Activated CD4-positive, alpha-beta T cell treated with anti-CD3 and anti-CD28 coated beads for 36 hours (primary cell): ENCODE measurements at regions of chr19 and their contacts with region 1.

Region 1: DNA sequence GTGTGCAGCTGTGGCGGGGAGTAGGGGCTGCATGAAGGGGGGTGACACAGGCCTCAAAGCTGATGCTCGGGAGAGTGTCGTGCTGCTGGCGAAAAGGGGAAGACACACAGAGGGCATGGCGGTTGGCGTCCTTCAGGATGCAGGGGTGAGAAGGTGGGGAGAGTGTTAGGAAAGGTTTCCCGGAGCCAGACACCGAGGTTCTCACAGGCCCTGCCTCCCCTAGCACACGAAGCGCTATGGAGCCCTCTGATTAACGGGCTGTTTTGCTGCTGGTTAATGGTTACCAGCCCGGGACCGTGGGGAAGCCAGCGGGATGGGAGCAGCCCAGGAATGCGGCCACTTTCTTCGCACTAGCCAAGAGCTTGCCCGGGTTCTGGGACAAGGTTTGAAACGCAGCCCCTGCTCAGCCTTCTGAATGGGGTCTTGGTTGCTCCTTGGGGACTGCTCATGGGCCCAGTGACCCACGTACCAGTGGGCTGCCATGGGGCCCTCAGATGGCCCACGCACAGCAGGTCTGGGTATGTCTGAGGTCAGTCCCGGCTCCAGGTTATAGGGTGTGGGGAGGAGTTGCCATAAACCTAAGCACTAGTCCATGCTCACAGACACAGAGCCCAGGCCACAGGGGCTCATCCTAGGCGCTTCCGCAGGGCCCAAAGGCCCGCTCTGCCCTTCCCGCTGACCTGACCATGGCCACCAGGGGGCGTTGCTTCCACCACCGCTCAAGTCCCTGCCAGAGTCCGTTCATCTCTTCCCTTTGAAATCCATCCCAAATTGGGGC is 31.3 kb upstream of the ISYNA1 start:
- DNase-seq: peak; percentile 83
- ATAC-seq: peak; percentile 71
- H3K4me3 Mint-ChIP-seq: no peak overlapping the region
- H3K27ac Mint-ChIP-seq: no peak overlapping the region
- H3K4me1 Mint-ChIP-seq: peaks cover 13% of the 10 kb centered on the region
- H3K27me3 Mint-ChIP-seq: no peaks in the 10 kb centered on the region

Region 2: DNA sequence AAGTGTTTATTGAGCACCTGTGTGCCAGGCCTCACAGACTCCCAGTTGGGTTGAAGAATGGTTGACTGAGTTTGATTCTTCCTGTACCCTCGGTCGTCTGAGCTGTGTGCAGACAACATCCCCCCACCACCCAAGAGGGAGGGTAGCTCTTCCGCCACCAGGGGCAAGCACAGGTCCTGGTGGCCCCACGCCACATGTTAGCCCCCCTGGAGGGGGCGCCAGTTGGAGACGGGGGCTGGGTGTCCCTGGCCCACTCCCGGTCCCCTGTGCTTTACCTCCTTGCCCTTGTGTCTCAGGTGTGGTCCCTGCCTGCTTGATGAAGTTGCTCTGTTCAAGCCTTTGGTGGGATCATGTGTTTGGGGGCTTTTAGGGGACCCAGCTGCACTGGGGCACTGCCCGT is 886.6 kb before region 1 on chr19:
- CTCF ChIA-PET with region 1: no interaction called
- POLR2A ChIA-PET with region 1: no interaction called
- intact Hi-C with region 1: no loop called
- DNase-seq: no peak
- ATAC-seq: no peak
- H3K4me3 Mint-ChIP-seq: no peak overlapping the region
- H3K27ac Mint-ChIP-seq: no peak overlapping the region
- H3K4me1 Mint-ChIP-seq: no peaks in the 10 kb centered on the region
- H3K27me3 Mint-ChIP-seq: no peaks in the 10 kb centered on the region

Region 3: DNA sequence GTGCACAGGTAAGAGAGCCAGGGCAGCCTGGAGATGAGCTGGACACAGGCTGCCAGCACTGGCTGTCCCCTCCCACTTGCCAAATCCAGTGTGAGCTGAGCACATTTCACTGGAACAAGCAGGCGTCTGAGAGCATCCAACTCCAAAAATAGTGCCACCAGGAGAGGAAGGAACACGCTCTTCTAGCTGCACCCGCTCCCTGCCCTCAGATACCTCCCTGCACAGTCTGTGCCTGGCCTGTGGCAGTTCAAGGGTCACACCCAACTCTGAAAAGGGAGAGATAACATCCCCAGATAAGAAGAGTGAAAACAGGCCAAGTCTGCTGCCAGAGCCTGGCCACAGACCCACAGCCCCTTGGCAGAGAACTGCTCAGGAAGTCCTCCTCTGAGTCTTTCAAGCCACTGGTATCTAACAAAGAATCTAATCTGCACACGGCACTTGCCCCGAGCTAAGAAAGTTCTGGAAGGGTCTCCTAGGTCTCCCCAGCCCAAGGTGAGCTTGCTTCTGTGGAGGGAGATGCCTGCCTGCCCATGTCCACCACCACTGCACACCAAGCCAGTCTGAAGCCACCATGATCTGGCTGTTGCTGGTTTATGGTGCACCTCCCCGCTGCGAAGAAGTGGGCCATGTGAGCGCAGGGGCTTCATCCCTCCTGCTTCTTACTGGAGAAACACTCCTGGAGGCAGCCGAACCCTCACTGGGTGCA is 37.9 kb after region 1 on chr19:
- CTCF ChIA-PET with region 1: interaction called, 4 read pairs
- POLR2A ChIA-PET with region 1: no interaction called
- intact Hi-C with region 1: loop called in 1 of 2 experiments (anchors 5 kb)
- DNase-seq: peak; percentile 31
- ATAC-seq: peak; percentile 23
- H3K4me3 Mint-ChIP-seq: no peak overlapping the region
- H3K27ac Mint-ChIP-seq: peak overlapping the region; percentile 83
- H3K4me1 Mint-ChIP-seq: peaks cover 69% of the 10 kb centered on the region
- H3K27me3 Mint-ChIP-seq: no peaks in the 10 kb centered on the region

Region 4: DNA sequence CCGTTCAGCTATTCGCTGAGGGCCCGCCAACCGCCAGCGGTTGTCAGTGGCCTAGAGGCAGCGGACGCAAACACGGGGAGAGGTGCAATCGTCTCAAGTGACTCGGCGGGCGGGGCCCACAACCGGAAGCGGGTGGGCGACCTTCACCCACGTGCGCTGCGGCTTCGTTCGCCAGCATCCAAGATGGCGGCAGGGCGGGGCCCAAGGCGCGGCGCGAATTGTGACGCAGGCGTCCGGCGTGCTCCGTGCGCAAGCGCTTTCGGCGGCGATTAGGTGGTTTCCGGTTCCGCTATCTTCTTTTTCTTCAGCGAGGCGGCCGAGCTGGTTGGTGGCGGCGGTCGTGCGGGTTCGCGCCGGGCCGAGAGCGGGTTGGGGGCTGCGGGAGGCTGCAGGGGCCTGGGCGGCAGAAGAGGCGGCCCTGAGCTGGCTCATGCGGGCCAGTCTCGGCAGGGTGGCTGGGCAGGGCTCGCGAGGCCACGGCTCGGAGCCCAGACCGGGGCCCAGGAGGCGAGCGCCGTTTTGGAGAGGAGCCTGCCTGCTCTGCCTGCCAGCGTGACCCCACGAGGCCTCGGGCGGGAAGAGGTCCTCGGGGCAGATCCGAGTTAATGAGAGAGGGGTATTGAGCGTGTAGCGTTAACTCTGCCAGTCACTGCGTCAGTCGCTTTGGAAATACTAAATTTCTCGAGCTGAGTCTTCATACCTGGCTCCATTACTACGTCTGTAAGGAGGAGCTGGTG is 102.5 kb after region 1 on chr19 and contains the start of gene UBA52:
- CTCF ChIA-PET with region 1: interaction called, 3 read pairs
- POLR2A ChIA-PET with region 1: interaction called, 3 read pairs
- intact Hi-C with region 1: loop called in 1 of 2 experiments (anchors 5 kb)
- DNase-seq: peak; percentile 100
- ATAC-seq: peak; percentile 94
- H3K4me3 Mint-ChIP-seq: peak within 1 kb of the TSS; percentile 89
- H3K27ac Mint-ChIP-seq: peak within 1 kb of the TSS; percentile 95
- H3K4me1 Mint-ChIP-seq: peaks cover 27% of the 10 kb centered on the region
- H3K27me3 Mint-ChIP-seq: no peaks in the 10 kb centered on the region
- total RNA-seq, gene UBA52: 1,703 to 2,296 TPM

Region 5: GRCh38 chr19:18675779-18676178 is 206.5 kb after region 1 on chr19:
- CTCF ChIA-PET with region 1: no interaction called
- POLR2A ChIA-PET with region 1: no interaction called
- intact Hi-C with region 1: loop called (anchors 5 to 10 kb)
- DNase-seq: peak; percentile 62
- ATAC-seq: no peak
- H3K4me3 Mint-ChIP-seq: no peak overlapping the region
- H3K27ac Mint-ChIP-seq: no peak overlapping the region
- H3K4me1 Mint-ChIP-seq: no peaks in the 10 kb centered on the region
- H3K27me3 Mint-ChIP-seq: no peaks in the 10 kb centered on the region

Region 6: GRCh38 chr19:18839465-18840287 is 370.4 kb after region 1 on chr19:
- CTCF ChIA-PET with region 1: no interaction called
- POLR2A ChIA-PET with region 1: no interaction called
- intact Hi-C with region 1: loop called (anchors 5 to 10 kb)
- DNase-seq: no peak
- ATAC-seq: no peak
- H3K4me3 Mint-ChIP-seq: no peak overlapping the region
- H3K27ac Mint-ChIP-seq: no peak overlapping the region
- H3K4me1 Mint-ChIP-seq: peaks cover 92% of the 10 kb centered on the region
- H3K27me3 Mint-ChIP-seq: no peaks in the 10 kb centered on the region